Dorsolateral prefrontal cortex (tissue), 120 donors: ENCODE measurements at regions of chr1 and their contacts with region 1.

Region 1: DNA sequence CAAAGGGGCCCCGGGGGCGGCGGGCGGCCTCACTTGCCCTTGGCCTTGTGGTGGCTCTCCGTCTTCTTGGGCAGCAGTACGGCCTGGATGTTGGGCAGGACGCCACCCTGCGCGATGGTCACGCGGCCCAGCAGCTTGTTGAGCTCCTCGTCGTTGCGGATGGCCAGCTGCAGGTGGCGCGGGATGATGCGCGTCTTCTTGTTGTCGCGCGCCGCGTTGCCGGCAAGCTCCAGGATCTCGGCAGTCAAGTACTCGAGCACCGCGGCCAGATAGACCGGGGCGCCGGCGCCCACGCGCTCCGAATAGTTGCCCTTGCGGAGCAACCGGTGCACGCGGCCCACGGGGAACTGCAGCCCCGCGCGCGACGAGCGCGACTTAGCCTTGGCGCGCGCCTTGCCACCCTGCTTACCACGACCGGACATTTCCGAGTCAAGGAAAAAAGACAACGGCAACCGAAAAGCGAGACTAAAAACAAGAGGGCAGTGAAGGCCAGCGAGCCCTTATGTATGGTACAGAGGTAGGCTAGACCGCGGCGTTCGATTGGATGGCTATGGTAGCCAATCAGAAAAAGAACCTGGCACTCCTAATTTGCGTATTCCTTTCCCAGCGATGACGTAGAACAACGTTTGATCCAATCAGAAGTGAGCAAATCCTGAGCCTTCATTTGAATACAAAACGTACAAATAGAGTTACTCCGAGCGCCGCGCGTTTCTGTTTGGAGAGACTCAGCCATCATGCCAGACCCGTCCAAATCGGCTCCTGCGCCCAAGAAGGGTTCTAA is 29.6 kb upstream of the RNF187 start:
- DNase-seq: peak; percentile 72 to 98 (median 92)
- H3K4me3 ChIP-seq: peak overlapping the region; percentile 49 to 84 (median 71)
- H3K27ac ChIP-seq: peak overlapping the region; percentile 71 to 97 (median 90)
- H3K27me3 ChIP-seq: peaks cover 0 to 43% (median 7%) of the 10 kb centered on the region in 45 donors
- CTCF ChIP-seq: peak in 33 of 56 donors; percentile 6 to 48 (median 32)

Region 2: GRCh38 chr1:228281933-228282645 is 175.5 kb before region 1 on chr1:
- intact Hi-C with region 1: no loop called
- DNase-seq: peak in 4 of 10 donors; percentile 14 to 41 (median 30)
- H3K4me3 ChIP-seq: no peak overlapping the region
- H3K27ac ChIP-seq: no peak overlapping the region
- H3K27me3 ChIP-seq: no peaks in the 10 kb centered on the region
- CTCF ChIP-seq: no peak

Region 3: DNA sequence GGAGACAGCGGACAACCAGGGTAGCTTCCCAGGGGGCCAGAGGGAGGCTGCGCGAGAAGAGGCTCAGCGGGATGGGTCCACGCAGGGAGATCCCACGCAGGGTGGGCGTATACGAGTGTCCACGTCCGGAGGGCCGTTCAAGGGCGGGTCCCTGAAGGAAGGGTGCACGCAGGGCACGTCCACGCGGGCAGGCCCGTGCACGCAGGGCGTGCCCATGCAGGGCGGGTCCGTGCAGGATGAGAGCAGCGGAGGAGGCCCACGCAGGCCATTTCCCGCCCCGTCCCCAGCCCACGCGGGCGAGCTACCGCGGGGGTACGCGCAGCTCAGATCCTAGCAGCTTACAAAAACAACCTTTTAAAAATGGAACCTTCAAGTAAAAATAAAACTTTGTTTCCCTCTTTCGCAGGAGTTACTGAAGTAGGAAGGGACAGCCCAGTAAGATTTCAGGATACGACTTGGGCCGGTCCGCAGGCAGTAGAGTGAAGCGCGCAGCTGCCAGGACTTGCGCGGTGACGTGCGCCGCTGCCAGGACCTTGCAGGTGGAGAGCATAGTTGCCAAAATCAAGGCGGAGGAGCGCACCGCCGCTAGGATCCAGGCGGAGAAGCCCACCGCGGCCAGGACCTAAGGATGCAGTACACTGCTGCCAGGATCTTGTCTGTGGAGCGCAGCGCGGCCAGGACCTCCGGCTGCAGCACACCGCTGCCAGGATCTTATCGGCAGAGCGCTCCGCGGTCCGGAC is 29.2 kb after region 1 on chr1:
- intact Hi-C with region 1: loop called in 1 of 2 experiments (anchors 1 kb)
- DNase-seq: peak; percentile 56 to 87 (median 78)
- H3K4me3 ChIP-seq: peak overlapping the region; percentile 66 to 99 (median 89)
- H3K27ac ChIP-seq: peak overlapping the region; percentile 97 to 100 (median 100)
- H3K27me3 ChIP-seq: no peaks in the 10 kb centered on the region
- CTCF ChIP-seq: peak in 6 of 56 donors; percentile 6 to 31 (median 16)